ENCODE measurements at regions of chr2 and their contacts with region 1.

Region 1: DNA sequence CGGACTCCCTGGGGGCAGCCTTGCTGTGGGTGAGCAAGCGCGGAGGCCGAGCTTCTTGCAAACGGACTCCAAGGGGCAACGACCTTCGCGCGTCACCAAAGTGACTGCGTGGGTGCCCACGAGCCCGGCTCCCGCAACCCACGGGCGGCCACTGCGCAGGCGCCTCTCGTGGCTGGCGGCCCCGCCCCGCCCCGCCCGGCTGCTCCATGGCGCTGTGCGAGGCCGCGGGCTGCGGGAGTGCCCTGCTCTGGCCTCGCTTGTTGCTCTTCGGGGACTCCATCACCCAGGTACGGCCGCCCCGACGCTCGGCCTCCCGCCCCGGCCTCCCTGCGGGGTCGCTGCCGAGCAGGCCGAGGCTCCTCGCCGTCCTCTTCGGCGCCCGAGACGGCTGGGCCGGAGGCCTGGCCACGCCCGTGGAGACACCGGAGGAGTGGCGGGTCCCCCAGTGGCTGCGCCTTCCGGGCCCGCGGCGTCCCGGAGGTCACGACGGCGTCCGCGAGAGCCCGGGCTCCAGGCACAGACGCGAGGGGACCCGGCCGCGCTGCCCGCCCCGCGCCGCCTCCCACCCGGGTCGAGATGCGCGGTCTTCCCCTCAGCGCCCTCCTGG is at the start of gene IAH1:
- DNase-seq: peak; percentile 84
- ATAC-seq: peak; percentile 85
- H3K4me3 Mint-ChIP-seq: peak within 1 kb of the TSS; percentile 80
- H3K27ac Mint-ChIP-seq: peak within 1 kb of the TSS; percentile 86
- H3K4me1 Mint-ChIP-seq: peaks cover 28% of the 10 kb centered on the region
- H3K27me3 Mint-ChIP-seq: no peaks in the 10 kb centered on the region
- total RNA-seq, gene IAH1: 73.6 to 73.9 TPM

Region 2: GRCh38 chr2:9423100-9423921 is 51.2 kb before region 1 on chr2 and contains the starts of genes CPSF3 and ITGB1BP1:
- POLR2A ChIA-PET with region 1: interaction called, 35 read pairs
- DNase-seq: peak; percentile 98
- ATAC-seq: peak; percentile 84
- H3K4me3 Mint-ChIP-seq: no peak within 1 kb of the TSS
- H3K27ac Mint-ChIP-seq: peak within 1 kb of the TSS; percentile 92
- H3K4me1 Mint-ChIP-seq: peaks cover 21% of the 10 kb centered on the region
- H3K27me3 Mint-ChIP-seq: no peaks in the 10 kb centered on the region
- total RNA-seq, gene CPSF3: 43.3 to 48.0 TPM
- total RNA-seq, gene ITGB1BP1: 104 to 122 TPM

Region 3: DNA sequence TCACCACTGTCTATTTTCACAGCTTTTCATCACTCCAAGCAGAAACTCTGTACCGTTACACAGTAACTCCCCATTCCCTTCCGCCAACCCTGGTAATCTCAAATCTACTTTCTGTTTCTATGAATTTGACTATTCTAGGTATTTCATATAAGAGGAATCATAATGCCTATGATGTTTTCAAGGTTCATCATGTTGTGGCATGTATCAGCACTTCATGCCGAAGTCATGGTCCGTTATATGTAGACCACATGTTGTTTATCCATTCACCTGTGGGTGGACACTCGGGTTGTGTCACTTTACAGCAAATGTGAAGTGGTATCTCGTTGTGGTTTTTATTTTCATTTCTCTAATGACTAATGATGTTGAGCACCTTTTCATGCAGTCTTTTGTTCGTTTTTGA is 29.4 kb before region 1 on chr2:
- POLR2A ChIA-PET with region 1: no interaction called
- DNase-seq: no peak
- ATAC-seq: no peak
- H3K4me3 Mint-ChIP-seq: no peak overlapping the region
- H3K27ac Mint-ChIP-seq: no peak overlapping the region
- H3K4me1 Mint-ChIP-seq: peaks cover 1% of the 10 kb centered on the region
- H3K27me3 Mint-ChIP-seq: no peaks in the 10 kb centered on the region

Measured in activated naive CD8-positive, alpha-beta T cell treated with anti-CD3 and anti-CD28 coated beads, Interleukin-2, amount 10 ng/mL, durations not matched to agents 7 days and 5 days (primary cell).